Caco-2 (cell line): ENCODE measurements at regions of chr12 and their contacts with region 1.

Region 1: DNA sequence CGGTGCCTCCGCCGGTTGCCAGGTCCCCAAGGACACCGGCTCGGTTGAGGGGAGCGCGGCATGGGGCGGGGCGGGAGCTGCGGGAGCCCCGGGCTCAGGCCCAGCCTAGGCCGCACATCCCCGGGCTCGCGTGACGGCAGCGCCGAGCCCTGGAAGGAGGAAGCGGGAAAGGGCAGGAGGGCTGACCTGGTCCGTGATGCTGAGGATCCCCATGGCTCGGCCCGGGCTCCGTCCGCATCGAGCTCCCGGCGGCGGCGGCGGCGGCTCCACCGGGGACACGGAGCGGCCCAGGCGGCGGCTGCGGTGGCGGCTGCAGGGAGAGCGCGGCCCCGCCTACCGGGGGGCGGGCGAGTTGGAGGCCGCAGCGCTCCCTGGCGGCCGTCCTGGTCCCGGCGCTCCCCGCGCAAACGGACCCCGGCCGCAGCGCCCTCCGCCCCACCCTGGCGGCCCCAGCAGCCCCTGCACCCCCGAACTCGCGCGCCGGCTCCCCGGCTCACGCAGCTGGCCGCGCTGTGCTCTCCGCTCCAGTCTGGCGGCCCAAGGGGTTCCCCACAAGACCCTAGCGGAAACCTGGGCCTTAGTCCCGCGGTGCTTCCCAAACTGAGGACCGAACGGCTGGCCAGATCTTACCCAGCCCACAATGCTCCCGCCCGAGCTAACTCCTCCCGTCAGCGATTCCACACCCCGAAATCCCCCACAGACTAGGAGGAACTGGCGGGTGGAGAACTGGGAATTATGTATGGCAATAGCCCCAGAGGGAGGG is at the start of gene ANKRD52:
- DNase-seq: peak; percentile 50 to 88
- H3K4me3 ChIP-seq: peak within 1 kb of the TSS; percentile 72
- H3K4me3 Mint-ChIP-seq: peak within 1 kb of the TSS; percentile 74
- H3K27ac Mint-ChIP-seq: peak within 1 kb of the TSS; percentile 56
- H3K4me1 ChIP-seq: peaks cover 38% of the 10 kb centered on the region
- H3K4me1 Mint-ChIP-seq: peaks cover 30% of the 10 kb centered on the region
- H3K27me3 ChIP-seq: no peaks in the 10 kb centered on the region
- H3K27me3 Mint-ChIP-seq: no peaks in the 10 kb centered on the region
- CTCF ChIP-seq: peak; percentile 50 to 59
- total RNA-seq, gene ANKRD52: 34.6 and 46.3 TPM in 2 replicates

Region 2: DNA sequence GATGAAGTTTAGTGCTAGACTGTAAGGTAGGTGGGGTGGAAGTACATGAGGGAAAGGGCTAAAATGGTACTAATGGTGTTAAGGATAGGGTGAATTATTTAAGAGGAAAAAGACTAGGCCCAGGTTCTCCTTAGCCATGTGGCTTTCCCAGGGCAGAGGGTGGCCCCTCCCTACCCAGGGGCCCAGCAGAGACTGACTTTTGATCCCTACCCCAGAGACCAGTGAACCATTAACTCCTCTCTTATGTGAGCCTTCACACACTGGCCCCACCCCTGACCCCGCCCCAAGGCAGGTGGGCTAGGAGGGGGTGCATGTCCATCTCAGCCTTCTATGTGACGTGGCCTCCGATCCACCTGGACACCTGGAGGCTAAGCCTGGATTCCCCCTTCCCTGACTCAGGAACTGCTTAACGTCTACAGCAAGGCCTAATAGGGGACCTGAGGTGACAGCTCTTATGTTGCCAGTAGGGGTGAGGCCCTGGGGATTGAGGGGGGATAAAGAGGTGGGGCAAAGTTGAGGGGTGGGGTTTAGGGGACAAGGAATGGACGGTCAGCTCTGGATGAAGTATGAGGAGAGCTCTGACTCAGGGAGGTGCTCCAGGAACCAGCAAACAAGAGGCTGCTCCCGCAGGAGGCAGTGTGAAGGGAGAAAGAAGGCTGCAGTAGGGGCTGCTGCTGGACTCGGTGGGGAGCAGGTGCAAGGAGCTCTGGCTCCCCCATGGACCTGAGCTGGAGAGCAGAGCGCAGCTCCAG is 27.6 kb before region 1 on chr12:
- CTCF ChIA-PET with region 1: interaction called, 3 read pairs
- POLR2A ChIA-PET with region 1: interaction called, 5 read pairs
- intact Hi-C with region 1: loop called (anchors 2 kb)
- DNase-seq: peak; percentile 94 to 96
- H3K4me3 ChIP-seq: peak overlapping the region; percentile 43
- H3K4me3 Mint-ChIP-seq: peak overlapping the region; percentile 86
- H3K27ac Mint-ChIP-seq: peak overlapping the region; percentile 85
- H3K4me1 ChIP-seq: peaks cover 29% of the 10 kb centered on the region
- H3K4me1 Mint-ChIP-seq: peaks cover 25% of the 10 kb centered on the region
- H3K27me3 ChIP-seq: no peaks in the 10 kb centered on the region
- H3K27me3 Mint-ChIP-seq: no peaks in the 10 kb centered on the region
- CTCF ChIP-seq: no peak

Region 3: DNA sequence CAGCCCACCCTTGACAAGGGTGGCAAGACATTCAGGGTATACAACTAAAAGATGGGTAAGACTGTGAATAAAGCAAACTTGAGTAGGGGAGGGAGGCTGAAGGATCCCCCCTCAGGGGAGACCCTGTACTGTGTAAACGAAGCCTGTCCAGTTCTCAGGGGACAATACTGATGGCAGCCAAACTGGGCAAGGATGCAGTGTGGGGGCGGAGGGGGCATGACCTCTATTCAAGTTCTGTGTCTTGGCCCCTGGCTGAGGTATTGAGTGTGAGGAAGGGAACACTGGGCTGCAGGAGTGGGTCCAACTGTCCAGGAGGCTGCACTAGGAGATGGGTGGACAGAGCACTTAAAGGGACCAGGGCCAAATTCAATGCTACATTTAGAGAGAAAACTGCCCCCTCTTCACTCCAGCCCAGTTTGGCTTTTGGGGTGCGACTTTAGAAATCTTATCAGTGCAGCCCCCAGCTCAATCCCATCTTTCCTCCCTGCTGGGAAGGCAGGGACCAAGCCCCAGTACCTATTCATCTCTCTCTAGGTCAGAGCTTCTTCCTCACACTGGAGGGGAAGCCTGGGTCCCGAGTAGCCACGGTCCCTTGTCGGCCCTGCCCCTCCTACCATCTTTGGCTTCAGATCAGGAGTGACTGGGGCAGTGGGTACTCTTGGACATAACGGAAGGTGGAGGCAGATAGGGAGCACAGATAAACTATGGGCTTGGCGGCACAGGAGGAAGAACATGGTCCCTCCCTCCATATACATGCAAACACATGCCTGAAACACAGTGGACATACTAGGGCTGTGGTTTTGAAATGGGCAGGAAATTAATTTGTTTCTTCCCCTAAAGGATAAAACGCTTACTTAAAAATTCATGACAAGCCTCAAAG is 16.6 kb before region 1 on chr12:
- CTCF ChIA-PET with region 1: no interaction called
- POLR2A ChIA-PET with region 1: no interaction called
- intact Hi-C with region 1: no loop called
- DNase-seq: no peak
- H3K4me3 ChIP-seq: no peak overlapping the region
- H3K4me3 Mint-ChIP-seq: no peak overlapping the region
- H3K27ac Mint-ChIP-seq: peak overlapping the region; percentile 45
- H3K4me1 ChIP-seq: peaks cover 8% of the 10 kb centered on the region; the same call in 1 of the 2 replicates
- H3K4me1 Mint-ChIP-seq: peaks cover 17% of the 10 kb centered on the region
- H3K27me3 ChIP-seq: no peaks in the 10 kb centered on the region
- H3K27me3 Mint-ChIP-seq: no peaks in the 10 kb centered on the region
- CTCF ChIP-seq: no peak